GM12878 (cell line): ENCODE measurements at regions of chr10 and their contacts with region 1.

Region 1: GRCh38 chr10:87817609-87818504 is at the start of gene ATAD1:
- DNase-seq: peak; percentile 76
- ATAC-seq: peak; percentile 87
- H3K4me3 ChIP-seq: peak within 1 kb of the TSS; percentile 94
- H3K27ac ChIP-seq: peak within 1 kb of the TSS; percentile 98
- H3K4me1 ChIP-seq: peaks cover 4% of the 10 kb centered on the region; the same call in 1 of the 2 replicates
- H3K27me3 ChIP-seq: no peaks in the 10 kb centered on the region
- CTCF ChIP-seq: peak; percentile 22 to 32 (median 29); a peak in 5 of 6 replicates
- EP300 ChIP-seq: no peak
- POLR2A ChIP-seq: peak; percentile 88
- RAD21 ChIP-seq: no peak
- polyA plus RNA-seq, gene ATAD1: 33.6 to 35.0 TPM

Region 2: GRCh38 chr10:87794285-87794684 is 23.6 kb before region 1 on chr10:
- CTCF ChIA-PET with region 1: interaction called, 24 read pairs
- POLR2A ChIA-PET with region 1: interaction called, 11 read pairs
- RAD21 ChIA-PET with region 1: interaction called, 25 read pairs
- SMC1A ChIA-PET with region 1: interaction called, 8 read pairs
- in situ Hi-C with region 1: no loop called
- intact Hi-C with region 1: no loop called
- DNase-seq: peak; percentile 48
- ATAC-seq: peak; percentile 63
- H3K4me3 ChIP-seq: no peak overlapping the region
- H3K27ac ChIP-seq: peak overlapping the region; percentile 7
- H3K4me1 ChIP-seq: peaks cover 18% of the 10 kb centered on the region
- H3K27me3 ChIP-seq: no peaks in the 10 kb centered on the region
- CTCF ChIP-seq: no peak
- EP300 ChIP-seq: peak in 1 of 2 experiments; percentile 59; a peak in 1 of 4 replicates
- POLR2A ChIP-seq: no peak
- RAD21 ChIP-seq: no peak

Region 3: GRCh38 chr10:87804939-87805569 is 12.8 kb before region 1 on chr10:
- CTCF ChIA-PET with region 1: interaction called, 24 read pairs
- POLR2A ChIA-PET with region 1: no interaction called
- RAD21 ChIA-PET with region 1: no interaction called
- SMC1A ChIA-PET with region 1: interaction called, 21 read pairs
- in situ Hi-C with region 1: no loop called
- intact Hi-C with region 1: no loop called
- DNase-seq: no peak
- ATAC-seq: peak; percentile 63
- H3K4me3 ChIP-seq: no peak overlapping the region
- H3K27ac ChIP-seq: no peak overlapping the region
- H3K4me1 ChIP-seq: no peaks in the 10 kb centered on the region
- H3K27me3 ChIP-seq: no peaks in the 10 kb centered on the region
- CTCF ChIP-seq: no peak
- EP300 ChIP-seq: no peak
- POLR2A ChIP-seq: no peak
- RAD21 ChIP-seq: no peak

Region 4: DNA sequence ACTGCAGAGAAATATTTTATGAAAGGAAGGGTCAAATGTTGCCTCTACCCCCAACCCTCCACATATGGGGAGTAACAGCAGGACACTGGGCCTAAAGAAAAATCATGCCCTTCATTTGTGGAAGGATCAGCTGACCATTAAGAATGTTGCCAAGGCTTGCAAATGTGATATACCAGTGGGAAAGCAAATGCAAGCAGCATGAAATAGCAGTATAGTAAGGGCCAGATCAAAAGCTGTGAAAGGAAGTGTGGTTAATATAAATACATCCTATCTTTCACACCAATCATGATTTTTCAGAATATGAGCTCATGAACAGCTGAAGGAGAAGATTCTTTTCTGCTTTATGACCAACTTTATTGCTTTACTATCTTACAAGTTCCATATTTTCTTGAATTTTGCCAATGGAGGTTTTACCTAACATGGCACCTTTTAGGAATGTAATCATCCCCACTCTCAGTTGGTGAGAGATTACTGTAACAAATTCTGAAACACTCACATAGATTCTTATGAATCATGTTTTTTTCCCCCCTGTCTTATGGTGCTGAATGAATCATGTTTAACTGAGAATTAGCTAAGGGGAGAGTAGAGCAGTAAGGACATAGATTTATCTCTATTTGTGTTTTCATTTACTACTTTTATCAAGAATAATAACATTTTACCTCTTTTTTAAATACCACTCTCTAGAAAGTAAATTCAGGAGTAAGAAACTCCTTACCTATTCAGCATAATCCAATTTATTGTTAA is 12.3 kb after region 1 on chr10:
- CTCF ChIA-PET with region 1: interaction called, 7 read pairs
- POLR2A ChIA-PET with region 1: interaction called, 5 read pairs
- RAD21 ChIA-PET with region 1: interaction called, 10 read pairs
- SMC1A ChIA-PET with region 1: interaction called, 21 read pairs
- in situ Hi-C with region 1: no loop called
- intact Hi-C with region 1: no loop called
- DNase-seq: no peak
- ATAC-seq: peak; percentile 56
- H3K4me3 ChIP-seq: no peak overlapping the region
- H3K27ac ChIP-seq: no peak overlapping the region
- H3K4me1 ChIP-seq: no peaks in the 10 kb centered on the region
- H3K27me3 ChIP-seq: no peaks in the 10 kb centered on the region
- CTCF ChIP-seq: no peak
- EP300 ChIP-seq: no peak
- POLR2A ChIP-seq: no peak
- RAD21 ChIP-seq: no peak

Region 5: GRCh38 chr10:87837445-87837844 is 19.6 kb after region 1 on chr10:
- CTCF ChIA-PET with region 1: interaction called, 3 read pairs
- POLR2A ChIA-PET with region 1: interaction called, 3 read pairs
- RAD21 ChIA-PET with region 1: interaction called, 3 read pairs
- SMC1A ChIA-PET with region 1: interaction called, 11 read pairs
- in situ Hi-C with region 1: no loop called
- intact Hi-C with region 1: no loop called
- DNase-seq: no peak
- ATAC-seq: peak; percentile 77
- H3K4me3 ChIP-seq: no peak overlapping the region
- H3K27ac ChIP-seq: no peak overlapping the region
- H3K4me1 ChIP-seq: peaks cover 6% of the 10 kb centered on the region; the same call in 1 of the 2 replicates
- H3K27me3 ChIP-seq: no peaks in the 10 kb centered on the region
- CTCF ChIP-seq: no peak
- EP300 ChIP-seq: no peak
- POLR2A ChIP-seq: no peak
- RAD21 ChIP-seq: no peak

Region 6: DNA sequence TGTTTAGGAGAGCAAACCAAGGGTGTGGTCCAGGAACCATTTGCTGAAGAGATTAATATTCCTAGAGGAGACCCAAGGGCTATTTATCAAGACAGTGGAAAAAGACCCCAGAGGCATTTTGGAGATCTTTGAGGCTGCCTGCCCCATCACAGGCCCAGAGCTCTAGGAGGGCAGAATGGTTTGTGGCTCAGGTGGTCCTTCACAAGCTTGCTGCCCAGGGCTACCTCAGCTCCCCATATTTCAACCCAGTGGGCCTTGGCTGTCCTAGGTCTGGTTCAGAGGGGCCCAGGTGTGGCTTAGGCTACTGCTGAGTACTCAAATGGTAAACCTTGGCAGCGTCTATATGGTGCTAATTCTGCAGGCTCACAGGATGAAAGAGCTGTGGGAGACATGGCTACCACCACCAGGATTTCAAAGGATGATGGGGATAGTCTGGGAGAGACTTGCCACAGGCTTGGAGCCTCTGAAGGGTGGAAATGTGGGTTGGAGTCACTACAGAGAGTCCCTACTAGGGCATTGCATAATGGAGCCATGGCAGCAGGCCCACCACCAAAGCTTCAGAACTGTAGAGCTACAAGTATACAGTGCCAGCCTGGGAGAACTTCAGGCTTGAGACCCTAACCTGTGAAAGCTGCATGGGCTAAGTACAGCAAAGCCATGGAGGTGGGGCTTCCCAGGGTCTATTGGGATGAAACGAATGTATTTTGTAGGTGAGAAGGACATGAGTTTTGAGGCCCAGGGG is 69.9 kb after region 1 on chr10:
- CTCF ChIA-PET with region 1: no interaction called
- POLR2A ChIA-PET with region 1: no interaction called
- RAD21 ChIA-PET with region 1: no interaction called
- SMC1A ChIA-PET with region 1: no interaction called
- in situ Hi-C with region 1: no loop called
- intact Hi-C with region 1: no loop called
- DNase-seq: no peak
- ATAC-seq: peak; percentile 23
- H3K4me3 ChIP-seq: no peak overlapping the region
- H3K27ac ChIP-seq: no peak overlapping the region
- H3K4me1 ChIP-seq: peaks cover under 1% of the 10 kb centered on the region
- H3K27me3 ChIP-seq: no peaks in the 10 kb centered on the region
- CTCF ChIP-seq: no peak
- EP300 ChIP-seq: no peak
- POLR2A ChIP-seq: no peak; the same call in 1 of the 2 replicates
- RAD21 ChIP-seq: no peak

Region 7: GRCh38 chr10:88227342-88228018 is 409.6 kb after region 1 on chr10:
- CTCF ChIA-PET with region 1: no interaction called
- POLR2A ChIA-PET with region 1: no interaction called
- RAD21 ChIA-PET with region 1: no interaction called
- SMC1A ChIA-PET with region 1: no interaction called
- in situ Hi-C with region 1: no loop called
- intact Hi-C with region 1: no loop called
- DNase-seq: no peak
- ATAC-seq: no peak
- H3K4me3 ChIP-seq: no peak overlapping the region
- H3K27ac ChIP-seq: no peak overlapping the region
- H3K4me1 ChIP-seq: no peaks in the 10 kb centered on the region
- H3K27me3 ChIP-seq: no peaks in the 10 kb centered on the region
- CTCF ChIP-seq: no peak
- EP300 ChIP-seq: no peak
- POLR2A ChIP-seq: no peak
- RAD21 ChIP-seq: no peak